ENCODE measurements at regions of chr4 and their contacts with region 1.

Region 1: GRCh38 chr4:106305435-106306055 is 10.5 kb downstream of the TBCK start:
- DNase-seq: no peak
- H3K4me3 ChIP-seq: no peak overlapping the region
- H3K4me3 Mint-ChIP-seq: peak overlapping the region; percentile 41
- H3K27ac Mint-ChIP-seq: peak overlapping the region; percentile 89
- H3K4me1 ChIP-seq: peaks cover 75% of the 10 kb centered on the region
- H3K4me1 Mint-ChIP-seq: peaks cover 68% of the 10 kb centered on the region
- H3K27me3 ChIP-seq: no peaks in the 10 kb centered on the region
- H3K27me3 Mint-ChIP-seq: no peaks in the 10 kb centered on the region
- CTCF ChIP-seq: no peak

Region 2: GRCh38 chr4:105594099-105594993 is 711.2 kb before region 1 on chr4:
- CTCF ChIA-PET with region 1: no interaction called
- POLR2A ChIA-PET with region 1: no interaction called
- intact Hi-C with region 1: loop called (anchors 5 kb)
- DNase-seq: peak in 1 of 2 experiments; percentile 57
- H3K4me3 ChIP-seq: no peak overlapping the region
- H3K4me3 Mint-ChIP-seq: peak overlapping the region; percentile 47
- H3K27ac Mint-ChIP-seq: peak overlapping the region; percentile 19
- H3K4me1 ChIP-seq: peaks cover 32% of the 10 kb centered on the region
- H3K4me1 Mint-ChIP-seq: peaks cover 18% of the 10 kb centered on the region
- H3K27me3 ChIP-seq: no peaks in the 10 kb centered on the region
- H3K27me3 Mint-ChIP-seq: no peaks in the 10 kb centered on the region
- CTCF ChIP-seq: no peak

Region 3: GRCh38 chr4:106258145-106259045 is 47.1 kb before region 1 on chr4:
- CTCF ChIA-PET with region 1: no interaction called
- POLR2A ChIA-PET with region 1: interaction called, 3 read pairs
- intact Hi-C with region 1: loop called (anchors 1 kb)
- DNase-seq: peak in 1 of 2 experiments; percentile 49
- H3K4me3 ChIP-seq: no peak overlapping the region
- H3K4me3 Mint-ChIP-seq: peak overlapping the region; percentile 43
- H3K27ac Mint-ChIP-seq: peak overlapping the region; percentile 63
- H3K4me1 ChIP-seq: peaks cover 69% of the 10 kb centered on the region
- H3K4me1 Mint-ChIP-seq: peaks cover 47% of the 10 kb centered on the region
- H3K27me3 ChIP-seq: no peaks in the 10 kb centered on the region
- H3K27me3 Mint-ChIP-seq: no peaks in the 10 kb centered on the region
- CTCF ChIP-seq: no peak

Region 4: GRCh38 chr4:106287353-106287969 is 18.1 kb before region 1 on chr4:
- CTCF ChIA-PET with region 1: no interaction called
- POLR2A ChIA-PET with region 1: no interaction called
- intact Hi-C with region 1: loop called (anchors 1 kb)
- DNase-seq: peak; percentile 35 to 61
- H3K4me3 ChIP-seq: no peak overlapping the region
- H3K4me3 Mint-ChIP-seq: no peak overlapping the region
- H3K27ac Mint-ChIP-seq: peak overlapping the region; percentile 71
- H3K4me1 ChIP-seq: peaks cover 15% of the 10 kb centered on the region
- H3K4me1 Mint-ChIP-seq: peaks cover 8% of the 10 kb centered on the region
- H3K27me3 ChIP-seq: no peaks in the 10 kb centered on the region
- H3K27me3 Mint-ChIP-seq: no peaks in the 10 kb centered on the region
- CTCF ChIP-seq: no peak

Region 5: GRCh38 chr4:106315968-106316772 is 10.6 kb after region 1 on chr4 and contains the starts of genes AIMP1 and TBCK:
- CTCF ChIA-PET with region 1: no interaction called
- POLR2A ChIA-PET with region 1: interaction called, 15 read pairs
- intact Hi-C with region 1: loop called (anchors 1 kb)
- DNase-seq: peak; percentile 88 to 91
- H3K4me3 ChIP-seq: peak within 1 kb of the TSS; percentile 75
- H3K4me3 Mint-ChIP-seq: no peak within 1 kb of the TSS
- H3K27ac Mint-ChIP-seq: no peak within 1 kb of the TSS
- H3K4me1 ChIP-seq: peaks cover 38% of the 10 kb centered on the region
- H3K4me1 Mint-ChIP-seq: peaks cover 11% of the 10 kb centered on the region
- H3K27me3 ChIP-seq: no peaks in the 10 kb centered on the region
- H3K27me3 Mint-ChIP-seq: no peaks in the 10 kb centered on the region
- CTCF ChIP-seq: no peak
- total RNA-seq, gene AIMP1: 130 and 143 TPM in 2 replicates
- total RNA-seq, gene TBCK: 51.1 and 58.7 TPM in 2 replicates

Region 6: DNA sequence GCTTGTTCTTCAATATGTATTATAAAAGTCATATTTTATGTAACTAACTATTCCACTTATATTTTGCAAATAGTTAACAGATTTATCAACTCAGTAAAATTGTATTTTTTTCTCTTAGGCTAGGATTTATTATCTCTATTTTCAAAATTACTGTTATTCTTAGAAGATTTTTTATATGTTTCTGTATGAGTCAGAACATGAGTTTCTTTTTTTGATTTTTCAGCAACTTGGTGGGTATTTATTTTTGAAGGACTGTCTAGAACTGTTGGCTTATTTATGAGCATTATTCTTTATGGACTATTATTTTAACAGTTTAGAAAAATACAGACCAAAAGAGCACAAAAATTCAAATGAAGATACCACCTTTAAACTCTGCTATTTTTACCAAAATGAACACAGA is 17.6 kb after region 1 on chr4:
- CTCF ChIA-PET with region 1: no interaction called
- POLR2A ChIA-PET with region 1: no interaction called
- intact Hi-C with region 1: loop called (anchors 2 kb)
- DNase-seq: no peak
- H3K4me3 ChIP-seq: no peak overlapping the region
- H3K4me3 Mint-ChIP-seq: no peak overlapping the region
- H3K27ac Mint-ChIP-seq: no peak overlapping the region
- H3K4me1 ChIP-seq: peaks cover 39% of the 10 kb centered on the region
- H3K4me1 Mint-ChIP-seq: peaks cover 11% of the 10 kb centered on the region
- H3K27me3 ChIP-seq: no peaks in the 10 kb centered on the region
- H3K27me3 Mint-ChIP-seq: no peaks in the 10 kb centered on the region
- CTCF ChIP-seq: no peak

Region 7: GRCh38 chr4:106344647-106344970 is 39.1 kb after region 1 on chr4:
- CTCF ChIA-PET with region 1: no interaction called
- POLR2A ChIA-PET with region 1: no interaction called
- intact Hi-C with region 1: loop called (anchors 1 kb)
- DNase-seq: no peak
- H3K4me3 ChIP-seq: no peak overlapping the region
- H3K4me3 Mint-ChIP-seq: peak overlapping the region; percentile 27
- H3K27ac Mint-ChIP-seq: peak overlapping the region; percentile 71
- H3K4me1 ChIP-seq: peaks cover 55% of the 10 kb centered on the region
- H3K4me1 Mint-ChIP-seq: peaks cover 16% of the 10 kb centered on the region
- H3K27me3 ChIP-seq: no peaks in the 10 kb centered on the region
- H3K27me3 Mint-ChIP-seq: no peaks in the 10 kb centered on the region
- CTCF ChIP-seq: no peak